ENCODE measurements at regions of chr18 and their contacts with region 1.

Region 1: GRCh38 chr18:35949903-35950627 is 22.4 kb upstream of the RMP24 start:
- DNase-seq: peak; percentile 61
- H3K4me3 ChIP-seq: peak overlapping the region; percentile 58
- H3K27ac ChIP-seq: no peak overlapping the region
- H3K4me1 ChIP-seq: no peaks in the 10 kb centered on the region
- H3K27me3 ChIP-seq: no peaks in the 10 kb centered on the region
- CTCF ChIP-seq: peak; percentile 96

Region 2: GRCh38 chr18:35386600-35387351 is 563.3 kb before region 1 on chr18:
- intact Hi-C with region 1: loop called (anchors 5 kb)
- DNase-seq: peak; percentile 75
- H3K4me3 ChIP-seq: no peak overlapping the region
- H3K27ac ChIP-seq: no peak overlapping the region
- H3K4me1 ChIP-seq: no peaks in the 10 kb centered on the region
- H3K27me3 ChIP-seq: no peaks in the 10 kb centered on the region
- CTCF ChIP-seq: peak; percentile 81

Region 3: DNA sequence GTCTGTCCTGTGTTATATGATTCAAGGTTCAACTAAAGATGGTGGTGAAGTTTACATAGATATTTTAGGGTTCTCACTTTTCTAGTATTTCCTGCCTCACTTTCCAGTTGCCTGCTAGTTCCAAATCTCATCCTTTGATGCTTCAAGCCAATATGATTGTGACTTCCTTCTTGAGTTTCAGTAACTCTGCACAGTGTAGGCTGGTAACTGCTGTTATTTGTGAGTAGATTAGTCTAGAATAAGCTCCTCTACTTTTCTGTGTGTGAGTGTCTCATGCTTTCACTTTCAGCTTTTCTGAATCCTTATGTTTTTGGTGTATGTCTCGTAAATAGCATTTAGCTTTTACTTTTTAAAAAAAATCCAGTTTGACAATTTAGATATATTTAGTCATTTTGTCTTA is 325.9 kb before region 1 on chr18:
- intact Hi-C with region 1: no loop called
- DNase-seq: no peak
- H3K4me3 ChIP-seq: no peak overlapping the region
- H3K27ac ChIP-seq: no peak overlapping the region
- H3K4me1 ChIP-seq: no peaks in the 10 kb centered on the region
- H3K27me3 ChIP-seq: no peaks in the 10 kb centered on the region
- CTCF ChIP-seq: no peak

Region 4: GRCh38 chr18:35756506-35757117 is 193.5 kb before region 1 on chr18:
- intact Hi-C with region 1: loop called (anchors 2 kb)
- DNase-seq: peak; percentile 55
- H3K4me3 ChIP-seq: no peak overlapping the region
- H3K27ac ChIP-seq: no peak overlapping the region
- H3K4me1 ChIP-seq: no peaks in the 10 kb centered on the region
- H3K27me3 ChIP-seq: no peaks in the 10 kb centered on the region
- CTCF ChIP-seq: peak; percentile 68

Measured in colonic mucosa (tissue), 4 donors.